GM12878 (cell line): ENCODE measurements at regions of chr7 and their contacts with region 1.

Region 1: DNA sequence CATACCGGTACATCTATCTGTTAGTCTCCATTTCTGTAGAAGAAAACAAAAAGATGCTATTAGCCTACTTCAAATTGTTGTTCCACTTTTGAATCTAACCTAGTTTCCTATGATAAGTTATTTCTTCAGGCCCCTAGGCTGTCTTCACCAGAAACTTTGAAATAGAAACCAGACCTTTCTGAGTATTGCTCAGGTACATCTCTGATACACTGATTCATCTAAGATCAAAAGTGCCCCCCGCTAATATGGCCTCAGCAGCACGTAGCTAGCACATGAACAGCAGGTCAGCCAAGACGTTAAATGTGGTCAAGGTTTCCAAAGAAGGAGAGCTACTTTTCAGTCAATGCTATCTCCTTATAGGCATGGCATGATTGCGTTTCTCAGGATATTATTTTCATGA is 23.6 kb downstream of the CTAGE6 start:
- DNase-seq: no peak
- ATAC-seq: no peak
- H3K4me3 ChIP-seq: no peak overlapping the region
- H3K27ac ChIP-seq: no peak overlapping the region
- H3K4me1 ChIP-seq: no peaks in the 10 kb centered on the region
- H3K27me3 ChIP-seq: no peaks in the 10 kb centered on the region
- CTCF ChIP-seq: no peak
- EP300 ChIP-seq: no peak
- POLR2A ChIP-seq: no peak
- RAD21 ChIP-seq: no peak

Region 2: DNA sequence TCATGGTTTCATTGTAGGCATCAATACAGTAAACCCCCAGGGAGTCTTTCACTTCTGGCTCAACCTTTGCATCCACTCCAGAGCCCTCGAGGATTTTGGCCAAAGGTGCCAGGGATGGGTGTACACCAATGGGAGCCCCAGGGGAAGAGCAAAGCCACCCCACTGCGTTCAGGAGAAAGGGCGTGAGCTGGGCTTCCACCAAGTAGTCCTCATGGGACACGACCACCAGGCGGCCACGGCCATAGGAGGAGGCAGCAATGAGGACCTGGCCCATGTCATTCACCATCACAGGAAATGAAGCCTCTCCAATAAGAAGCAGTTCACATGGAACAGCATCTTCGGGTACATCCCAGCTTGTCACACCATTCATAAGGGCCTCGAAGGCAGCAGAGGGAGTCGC is 142.3 kb after region 1 on chr7:
- CTCF ChIA-PET with region 1: no interaction called
- POLR2A ChIA-PET with region 1: no interaction called
- RAD21 ChIA-PET with region 1: no interaction called
- SMC1A ChIA-PET with region 1: no interaction called
- in situ Hi-C with region 1: no loop called
- intact Hi-C with region 1: no loop called
- DNase-seq: no peak
- ATAC-seq: no peak
- H3K4me3 ChIP-seq: no peak overlapping the region
- H3K27ac ChIP-seq: no peak overlapping the region
- H3K4me1 ChIP-seq: no peaks in the 10 kb centered on the region
- H3K27me3 ChIP-seq: no peaks in the 10 kb centered on the region
- CTCF ChIP-seq: no peak
- EP300 ChIP-seq: no peak
- POLR2A ChIP-seq: no peak
- RAD21 ChIP-seq: no peak

Region 3: GRCh38 chr7:143892527-143893300 is 158.8 kb after region 1 on chr7:
- CTCF ChIA-PET with region 1: interaction called, 19 read pairs
- POLR2A ChIA-PET with region 1: no interaction called
- RAD21 ChIA-PET with region 1: interaction called, 12 read pairs
- SMC1A ChIA-PET with region 1: interaction called, 14 read pairs
- in situ Hi-C with region 1: no loop called
- intact Hi-C with region 1: no loop called
- DNase-seq: peak; percentile 19
- ATAC-seq: peak; percentile 99
- H3K4me3 ChIP-seq: no peak overlapping the region
- H3K27ac ChIP-seq: no peak overlapping the region
- H3K4me1 ChIP-seq: no peaks in the 10 kb centered on the region
- H3K27me3 ChIP-seq: no peaks in the 10 kb centered on the region
- CTCF ChIP-seq: peak; percentile 49 to 60 (median 51); a peak in 5 of 6 replicates
- EP300 ChIP-seq: no peak
- POLR2A ChIP-seq: no peak
- RAD21 ChIP-seq: peak; percentile 51

Region 4: DNA sequence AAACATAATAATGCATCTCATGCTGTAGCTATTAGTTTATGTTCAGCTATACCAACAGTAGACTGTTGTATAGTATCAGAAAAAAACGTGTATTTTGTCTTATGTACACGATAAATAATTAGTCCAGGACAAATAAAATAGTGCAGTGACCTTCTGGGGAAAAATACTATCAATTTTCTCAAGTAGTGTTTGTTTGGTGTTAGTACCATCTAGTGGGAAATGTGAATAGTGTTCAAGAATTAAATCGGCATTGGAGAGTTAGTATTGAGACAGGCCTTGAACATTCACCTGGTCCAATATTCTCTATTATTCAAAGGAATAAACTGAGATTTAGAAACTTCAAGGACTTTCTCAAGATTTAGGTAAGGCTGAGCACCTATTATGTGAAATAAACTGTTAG is 293.2 kb after region 1 on chr7:
- CTCF ChIA-PET with region 1: interaction called, 12 read pairs
- POLR2A ChIA-PET with region 1: no interaction called
- RAD21 ChIA-PET with region 1: no interaction called
- SMC1A ChIA-PET with region 1: interaction called, 4 read pairs
- in situ Hi-C with region 1: no loop called
- intact Hi-C with region 1: no loop called
- DNase-seq: no peak
- ATAC-seq: peak; percentile 38; the same call in 1 of the 3 replicates
- H3K4me3 ChIP-seq: no peak overlapping the region
- H3K27ac ChIP-seq: no peak overlapping the region
- H3K4me1 ChIP-seq: no peaks in the 10 kb centered on the region
- H3K27me3 ChIP-seq: no peaks in the 10 kb centered on the region; a peak in 1 of 4 replicates
- CTCF ChIP-seq: peak in 1 of 3 experiments; percentile 37; a peak in 2 of 6 replicates
- EP300 ChIP-seq: no peak
- POLR2A ChIP-seq: no peak
- RAD21 ChIP-seq: peak; percentile 54